PC-9 (cell line): ENCODE measurements at regions of chr7 and their contacts with region 1.

Region 1: DNA sequence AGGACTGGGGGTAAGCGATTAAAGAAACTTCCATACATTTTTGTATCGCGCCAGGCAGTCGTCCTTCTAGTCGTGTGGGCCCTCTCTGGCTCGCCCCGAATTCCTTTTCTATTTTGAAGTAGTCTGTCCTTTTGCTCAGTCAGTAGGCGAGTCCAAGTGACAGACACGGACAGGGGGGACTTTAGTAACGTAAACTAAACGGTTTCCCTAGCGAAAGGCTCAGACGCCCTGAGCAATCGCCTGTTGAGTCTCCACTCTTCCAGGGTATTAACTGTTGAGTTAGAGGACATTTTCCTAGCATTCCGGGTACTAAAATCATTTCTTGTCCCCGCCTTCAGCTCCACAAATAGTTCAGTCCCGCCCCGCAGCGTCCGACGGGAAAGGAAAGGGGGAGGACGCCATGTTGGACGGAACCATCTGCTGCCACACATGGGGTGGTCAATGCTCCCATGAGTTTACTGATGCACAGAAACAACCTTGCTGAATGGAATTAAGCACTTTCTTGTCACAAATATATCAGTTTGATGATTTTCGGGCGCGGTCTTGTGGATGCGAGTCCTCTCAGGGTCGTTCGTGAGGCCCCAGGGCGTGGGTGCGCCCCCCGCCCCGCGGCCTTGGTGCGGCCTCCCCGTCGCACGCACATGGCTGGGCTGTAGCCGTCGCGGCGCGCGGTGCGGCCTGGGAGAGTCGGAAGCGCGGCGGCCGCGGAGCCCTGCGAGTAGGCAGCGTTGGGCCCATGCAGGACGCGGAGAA is at the start of gene EIF3B:
- DNase-seq: peak; percentile 84 to 88
- H3K4me3 ChIP-seq: peak within 1 kb of the TSS; percentile 75
- H3K27ac ChIP-seq: peak within 1 kb of the TSS; percentile 92
- H3K4me1 ChIP-seq: peaks cover 27% of the 10 kb centered on the region
- H3K27me3 ChIP-seq: no peaks in the 10 kb centered on the region
- CTCF ChIP-seq: no peak
- total RNA-seq, gene EIF3B: 299 and 302 TPM in 2 replicates

Region 2: DNA sequence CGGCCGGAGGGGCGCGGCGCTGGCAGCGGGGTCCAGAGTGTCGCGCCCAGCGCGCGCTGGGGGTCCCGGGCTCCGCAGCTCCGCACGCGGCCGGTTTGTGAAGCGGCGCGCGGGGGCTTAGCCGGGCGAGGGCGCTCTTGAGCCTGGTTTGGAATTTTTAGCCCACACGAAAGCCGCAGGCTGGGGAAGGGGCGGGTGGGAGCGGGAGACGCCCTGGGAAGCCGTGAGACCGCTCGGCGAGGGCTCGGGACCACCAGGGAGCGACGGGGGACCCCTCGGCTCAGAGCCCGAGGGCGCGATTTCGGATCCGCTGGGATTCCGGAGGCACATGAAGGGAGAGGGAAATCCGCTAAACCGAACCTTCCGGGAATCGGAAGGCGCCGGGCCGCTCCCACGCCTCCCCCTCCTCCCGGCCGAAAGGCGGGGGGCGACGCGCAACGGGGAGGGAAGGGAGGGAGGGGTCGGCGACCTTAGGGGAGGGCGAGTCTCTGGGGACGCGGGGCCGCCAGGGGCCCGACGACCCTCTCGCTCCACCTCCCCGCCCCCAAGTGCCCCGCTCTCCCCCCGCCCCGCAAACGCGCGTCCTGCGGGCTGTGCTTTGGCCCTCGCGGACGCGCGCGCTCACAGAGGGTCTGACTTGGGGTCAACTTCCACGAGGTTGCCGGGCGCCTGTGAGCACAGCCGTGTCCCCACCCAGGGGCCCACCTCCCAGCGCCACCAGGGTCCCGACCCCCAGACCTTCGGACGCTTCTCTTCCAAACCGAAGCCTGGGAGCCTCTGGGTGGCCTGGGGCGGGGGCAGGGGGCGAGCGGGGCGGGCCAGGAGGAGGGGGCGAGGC is 689.4 kb before region 1 on chr7:
- CTCF ChIA-PET with region 1: interaction called, 8 read pairs
- POLR2A ChIA-PET with region 1: no interaction called
- intact Hi-C with region 1: loop called (anchors 5 kb)
- DNase-seq: peak in 1 of 2 experiments; percentile 66
- H3K4me3 ChIP-seq: peak overlapping the region; percentile 38; the same call in 1 of the 2 replicates
- H3K27ac ChIP-seq: no peak overlapping the region
- H3K4me1 ChIP-seq: peaks cover 8% of the 10 kb centered on the region; the same call in 1 of the 2 replicates
- H3K27me3 ChIP-seq: peaks cover 60% of the 10 kb centered on the region
- CTCF ChIP-seq: peak; percentile 79

Region 3: GRCh38 chr7:2148189-2148588 is 206.2 kb before region 1 on chr7:
- CTCF ChIA-PET with region 1: no interaction called
- POLR2A ChIA-PET with region 1: no interaction called
- intact Hi-C with region 1: no loop called
- DNase-seq: no peak
- H3K4me3 ChIP-seq: no peak overlapping the region
- H3K27ac ChIP-seq: no peak overlapping the region
- H3K4me1 ChIP-seq: no peaks in the 10 kb centered on the region
- H3K27me3 ChIP-seq: no peaks in the 10 kb centered on the region
- CTCF ChIP-seq: no peak; the same call in 1 of the 2 replicates

Region 4: DNA sequence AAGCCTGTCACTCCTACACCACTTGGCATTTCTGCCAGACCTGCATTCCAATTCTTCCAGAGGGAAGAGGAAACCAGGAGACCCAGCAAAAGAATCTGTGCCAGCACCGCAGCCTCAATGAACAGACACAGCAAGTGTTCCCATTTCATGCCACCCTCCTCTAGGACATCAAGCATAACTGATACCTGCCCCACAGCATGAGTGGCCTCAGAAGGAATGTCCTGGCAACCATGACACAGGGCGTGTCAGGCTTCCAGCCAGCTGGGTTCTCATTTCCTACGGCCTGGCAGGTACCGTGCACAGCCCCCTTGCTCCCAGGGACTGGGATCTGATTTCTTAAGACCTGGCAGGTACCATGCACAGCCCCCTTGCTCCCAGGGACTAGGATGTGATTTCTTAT is 129.4 kb before region 1 on chr7:
- CTCF ChIA-PET with region 1: no interaction called
- POLR2A ChIA-PET with region 1: no interaction called
- intact Hi-C with region 1: loop called (anchors 5 kb)
- DNase-seq: peak; percentile 65 to 83
- H3K4me3 ChIP-seq: no peak overlapping the region
- H3K27ac ChIP-seq: no peak overlapping the region
- H3K4me1 ChIP-seq: no peaks in the 10 kb centered on the region
- H3K27me3 ChIP-seq: no peaks in the 10 kb centered on the region
- CTCF ChIP-seq: no peak

Region 5: DNA sequence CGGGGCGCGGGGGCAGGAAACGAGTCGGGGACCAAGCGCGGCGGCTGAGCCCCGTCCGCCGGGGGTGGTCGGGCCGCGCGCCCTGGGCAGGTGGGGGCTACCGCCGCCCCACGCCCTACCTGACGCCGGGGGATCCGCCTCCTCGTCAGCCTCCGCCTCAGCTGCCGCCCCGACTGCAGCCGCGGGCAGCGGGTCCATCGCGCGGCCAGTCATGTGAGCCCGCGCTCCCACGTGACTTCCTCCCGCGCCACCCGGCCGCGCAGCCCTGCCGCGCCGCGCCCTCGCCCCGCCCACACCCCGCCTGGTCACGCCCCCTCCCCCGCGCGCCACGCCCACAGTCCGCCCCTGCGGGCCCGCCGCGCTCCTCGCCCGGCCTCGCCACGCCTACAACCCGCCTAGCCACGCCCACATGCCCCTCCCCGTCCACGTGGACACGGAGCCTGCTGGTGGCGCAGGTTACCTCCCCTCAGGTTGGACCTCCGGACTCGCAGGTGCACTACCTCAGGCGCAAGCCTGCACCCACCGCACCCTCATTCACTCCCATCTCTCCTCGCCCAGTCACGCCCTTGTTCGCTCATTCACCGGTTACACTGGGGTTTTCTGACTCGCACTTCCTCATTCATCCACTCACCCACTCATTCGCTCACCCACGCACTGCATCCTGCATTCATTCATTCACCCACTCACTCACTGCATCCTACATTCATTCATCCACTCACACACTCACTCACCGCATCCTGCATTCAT is 40.0 kb before region 1 on chr7 and contains the start of gene SNX8:
- CTCF ChIA-PET with region 1: no interaction called
- POLR2A ChIA-PET with region 1: interaction called, 9 read pairs
- intact Hi-C with region 1: loop called (anchors 5 kb)
- DNase-seq: peak; percentile 87 to 100
- H3K4me3 ChIP-seq: peak within 1 kb of the TSS; percentile 72
- H3K27ac ChIP-seq: no peak within 1 kb of the TSS
- H3K4me1 ChIP-seq: 0 out of 2 replicates have a peak, but pooled peaks cover 4% of the 10 kb centered on the region
- H3K27me3 ChIP-seq: no peaks in the 10 kb centered on the region
- CTCF ChIP-seq: no peak
- total RNA-seq, gene SNX8: 73.9 and 102 TPM in 2 replicates

Region 6: GRCh38 chr7:2555121-2556052 is 201.0 kb after region 1 on chr7 and contains the start of gene BRAT1:
- CTCF ChIA-PET with region 1: no interaction called
- POLR2A ChIA-PET with region 1: interaction called, 18 read pairs
- intact Hi-C with region 1: no loop called
- DNase-seq: peak; percentile 95 to 98
- H3K4me3 ChIP-seq: peak within 1 kb of the TSS; percentile 86
- H3K27ac ChIP-seq: peak within 1 kb of the TSS; percentile 87
- H3K4me1 ChIP-seq: peaks cover 36% of the 10 kb centered on the region
- H3K27me3 ChIP-seq: no peaks in the 10 kb centered on the region
- CTCF ChIP-seq: peak; percentile 47
- total RNA-seq, gene BRAT1: 53.9 and 57.7 TPM in 2 replicates